K562 (cell line): ENCODE measurements at regions of chr19 and their contacts with region 1.

Region 1: GRCh38 chr19:10431943-10432735 is 11.8 kb downstream of the PDE4A start:
- DNase-seq: peak; percentile 87 to 90 (median 88)
- ATAC-seq: peak; percentile 85
- H3K4me3 ChIP-seq: peak overlapping the region; percentile 64
- H3K27ac ChIP-seq: peak overlapping the region; percentile 80
- H3K4me1 ChIP-seq: peaks cover 16 to 50% of the 10 kb centered on the region in 2 experiments; a peak in 4 of 5 replicates
- H3K27me3 ChIP-seq: no peaks in the 10 kb centered on the region
- CTCF ChIP-seq: no peak; a peak in 2 of 6 replicates
- EP300 ChIP-seq: no peak
- POLR2A ChIP-seq: no peak
- RAD21 ChIP-seq: no peak

Region 2: DNA sequence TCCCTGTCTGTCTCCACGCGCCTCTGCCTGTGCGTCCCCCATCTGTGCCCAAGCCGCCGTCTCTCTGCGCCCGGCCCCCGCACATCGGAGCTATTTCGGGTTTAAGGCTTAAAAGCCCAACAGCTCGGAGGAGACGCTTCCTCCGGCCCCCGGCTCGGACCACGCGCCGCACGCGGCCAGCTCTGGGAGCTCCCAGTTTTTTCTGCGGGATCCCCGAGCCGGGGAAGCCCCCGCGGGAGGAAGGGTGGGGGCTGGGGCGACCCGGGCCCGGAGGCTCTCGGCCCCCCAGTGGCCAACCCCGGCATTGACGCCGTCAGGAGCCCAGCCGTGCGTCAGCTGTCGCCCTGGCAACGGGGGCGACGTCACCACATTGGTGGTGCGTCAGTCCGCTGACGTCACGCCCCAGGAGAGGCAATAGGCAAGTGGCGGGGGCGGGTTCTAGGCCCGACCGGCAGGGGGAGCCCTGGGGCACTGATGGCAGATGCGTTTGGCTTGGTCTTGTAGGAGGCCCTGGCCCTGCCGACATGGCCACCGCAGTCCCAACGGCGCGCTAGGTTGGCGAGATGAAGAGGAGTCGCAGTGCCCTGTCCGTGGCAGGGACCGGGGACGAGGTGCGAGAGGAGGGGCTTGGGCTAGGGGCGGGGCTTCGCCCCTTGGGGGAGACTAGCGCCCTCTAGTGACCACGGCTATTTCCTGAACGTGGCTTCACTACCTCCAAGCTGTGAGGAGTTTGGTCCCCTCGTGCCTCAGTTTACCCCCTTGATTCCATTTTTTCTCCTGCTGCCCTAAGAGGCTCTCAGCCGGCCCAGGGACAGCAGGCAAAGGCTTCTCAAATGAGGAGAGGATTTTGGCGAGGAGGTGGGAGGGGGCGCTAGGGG is 15.5 kb before region 1 on chr19:
- CTCF ChIA-PET with region 1: interaction called, 3 read pairs
- POLR2A ChIA-PET with region 1: interaction called, 10 read pairs
- in situ Hi-C with region 1: no loop called
- intact Hi-C with region 1: loop called (anchors 2 kb)
- DNase-seq: peak; percentile 89 to 97 (median 92)
- ATAC-seq: peak; percentile 61
- H3K4me3 ChIP-seq: peak overlapping the region; percentile 58
- H3K27ac ChIP-seq: peak overlapping the region; percentile 95
- H3K4me1 ChIP-seq: peaks cover 32 to 62% of the 10 kb centered on the region in 2 experiments
- H3K27me3 ChIP-seq: no peaks in the 10 kb centered on the region
- CTCF ChIP-seq: peak; percentile 80 to 99 (median 89)
- EP300 ChIP-seq: peak; percentile 40; the same call in 1 of the 2 replicates
- POLR2A ChIP-seq: peak; percentile 67; the same call in 1 of the 2 replicates
- RAD21 ChIP-seq: peak; percentile 12 to 47; a peak in 3 of 4 replicates